Common myeloid progenitor, CD34-positive (primary cell): ENCODE measurements at regions of chr11 and their contacts with region 1.

Region 1: DNA sequence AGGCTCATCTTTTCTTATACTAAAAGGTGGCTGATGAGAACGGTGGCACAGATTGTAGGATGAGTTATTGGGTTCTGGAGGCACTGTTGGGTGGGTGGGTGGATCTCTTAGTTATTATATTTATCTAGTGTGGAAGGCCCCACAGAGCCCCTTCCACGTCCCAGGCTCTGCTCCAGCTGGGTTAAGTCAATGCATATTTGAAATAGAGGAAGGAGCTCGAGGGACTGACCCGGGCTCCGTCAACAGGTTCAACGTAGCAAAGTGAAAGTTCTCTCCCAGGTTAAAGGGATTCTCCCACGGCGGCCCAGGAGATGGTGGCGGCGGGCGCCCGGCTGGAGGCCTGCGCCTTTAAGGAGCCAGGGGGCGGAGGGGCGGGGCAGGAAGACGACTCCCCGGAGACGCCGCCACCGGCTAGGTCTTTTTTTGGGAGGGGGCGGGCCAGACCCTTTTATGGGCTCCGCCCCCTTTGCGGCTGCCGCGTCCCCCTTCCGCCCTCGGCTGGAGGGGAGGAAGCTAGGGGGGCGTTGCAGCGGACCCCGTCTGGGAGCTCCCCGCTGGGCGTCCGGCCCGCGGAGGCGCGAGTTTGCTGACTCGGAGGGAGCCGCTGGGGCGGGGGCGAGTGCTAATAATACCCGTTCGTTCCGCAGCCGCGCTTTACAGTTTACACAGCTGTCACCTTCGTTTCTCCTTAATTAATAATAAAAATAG is 1.5 kb upstream of the INPPL1 start:
- DNase-seq: peak; percentile 95 to 98 (median 97)
- H3K4me3 ChIP-seq: peak overlapping the region; percentile 61 to 95 (median 86)
- H3K27ac ChIP-seq: peak overlapping the region; percentile 50 to 85
- H3K4me1 ChIP-seq: peaks cover 10 to 53% (median 40%) of the 10 kb centered on the region in 4 experiments
- H3K27me3 ChIP-seq: no peaks in the 10 kb centered on the region

Region 2: GRCh38 chr11:72179804-72180396 is 43.2 kb before region 1 on chr11:
- CTCF ChIA-PET with region 1: interaction called, 11 read pairs
- POLR2A ChIA-PET with region 1: interaction called, 3 read pairs
- DNase-seq: no peak
- H3K4me3 ChIP-seq: no peak overlapping the region
- H3K27ac ChIP-seq: no peak overlapping the region
- H3K4me1 ChIP-seq: peaks cover 0 to 6% (median 1%) of the 10 kb centered on the region in 4 experiments
- H3K27me3 ChIP-seq: no peaks in the 10 kb centered on the region

Region 3: GRCh38 chr11:72238040-72238450 is 15.0 kb after region 1 on chr11:
- CTCF ChIA-PET with region 1: interaction called, 27 read pairs
- POLR2A ChIA-PET with region 1: interaction called, 3 read pairs
- DNase-seq: peak; percentile 56 to 71 (median 71)
- H3K4me3 ChIP-seq: no peak overlapping the region
- H3K27ac ChIP-seq: no peak overlapping the region
- H3K4me1 ChIP-seq: peaks cover 0 to 35% (median 22%) of the 10 kb centered on the region in 4 experiments
- H3K27me3 ChIP-seq: peaks cover 0 to 52% (median 21%) of the 10 kb centered on the region in 5 experiments

Region 4: DNA sequence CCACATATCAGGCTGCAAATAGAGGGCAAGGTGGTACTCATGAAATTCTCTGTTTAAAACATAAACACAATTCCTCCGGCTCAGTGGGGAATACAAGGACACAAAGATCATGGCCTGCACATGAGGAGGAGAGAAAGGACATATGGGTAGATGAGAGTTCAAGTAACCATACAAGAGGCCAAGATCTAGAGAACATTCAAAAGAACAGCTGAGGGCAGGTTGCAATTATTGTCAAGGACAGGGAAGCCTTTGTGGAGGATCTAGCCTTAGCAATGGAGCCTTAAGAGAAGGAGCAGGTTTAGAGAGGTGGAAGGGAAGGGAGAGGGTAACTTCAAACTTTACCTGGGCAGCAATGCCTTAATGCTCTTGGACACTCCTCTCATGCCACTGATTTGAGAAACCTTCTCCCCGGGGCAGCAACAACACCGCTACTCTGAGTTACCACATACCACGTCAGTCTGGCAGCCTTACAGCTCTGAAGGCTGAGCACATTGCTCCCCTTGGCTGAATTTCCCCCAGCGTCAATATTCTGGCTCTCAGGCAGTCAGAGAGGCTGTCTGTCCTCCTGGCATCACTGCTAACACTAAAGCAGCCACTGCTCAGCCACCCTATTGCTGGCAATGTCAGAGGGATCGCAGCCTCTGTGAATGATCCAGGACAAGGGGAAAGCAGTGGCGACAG is 155.8 kb after region 1 on chr11:
- CTCF ChIA-PET with region 1: no interaction called
- POLR2A ChIA-PET with region 1: no interaction called
- DNase-seq: no peak
- H3K4me3 ChIP-seq: no peak overlapping the region
- H3K27ac ChIP-seq: no peak overlapping the region
- H3K4me1 ChIP-seq: no peaks in the 10 kb centered on the region
- H3K27me3 ChIP-seq: no peaks in the 10 kb centered on the region